Common myeloid progenitor, CD34-positive (primary cell): ENCODE measurements at regions of chr4 and their contacts with region 1.

Region 1: GRCh38 chr4:2862528-2862927 is 18.9 kb downstream of the ADD1 start:
- DNase-seq: no peak
- H3K4me3 ChIP-seq: no peak overlapping the region
- H3K27ac ChIP-seq: no peak overlapping the region
- H3K4me1 ChIP-seq: peaks cover 27 to 51% (median 42%) of the 10 kb centered on the region in 4 experiments
- H3K27me3 ChIP-seq: no peaks in the 10 kb centered on the region

Region 2: DNA sequence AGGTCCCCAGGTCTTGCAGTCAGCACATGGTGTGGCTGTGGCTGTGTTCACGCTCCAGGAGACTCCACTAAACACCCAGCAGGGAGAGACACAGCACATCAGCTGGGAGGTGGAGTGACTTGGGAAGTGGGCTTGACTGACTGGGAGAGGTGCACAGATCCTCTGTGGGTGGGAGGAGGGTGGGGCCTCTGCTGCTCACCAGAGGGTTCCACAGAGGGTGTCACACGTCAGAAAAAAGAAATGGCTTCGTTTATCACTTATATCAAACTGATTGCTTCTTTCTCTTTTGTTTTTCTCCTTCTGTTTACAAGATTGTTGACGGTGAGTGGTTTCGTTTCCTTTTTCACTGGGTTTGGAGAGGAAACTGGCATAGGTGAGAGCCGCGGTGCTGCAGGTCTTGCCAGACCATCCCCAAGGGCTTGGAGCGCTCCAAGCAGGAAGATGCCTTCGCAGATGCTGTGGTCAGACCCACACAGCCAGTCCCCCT is 350.8 kb before region 1 on chr4:
- CTCF ChIA-PET with region 1: no interaction called
- POLR2A ChIA-PET with region 1: no interaction called
- DNase-seq: no peak
- H3K4me3 ChIP-seq: no peak overlapping the region
- H3K27ac ChIP-seq: no peak overlapping the region
- H3K4me1 ChIP-seq: no peaks in the 10 kb centered on the region
- H3K27me3 ChIP-seq: no peaks in the 10 kb centered on the region

Region 3: GRCh38 chr4:2852481-2852921 is 10.0 kb before region 1 on chr4:
- CTCF ChIA-PET with region 1: interaction called, 17 read pairs
- POLR2A ChIA-PET with region 1: interaction called, 3 read pairs
- DNase-seq: peak in 1 of 3 donors; percentile 69
- H3K4me3 ChIP-seq: peak overlapping the region in 1 of 7 experiments; percentile 33
- H3K27ac ChIP-seq: no peak overlapping the region
- H3K4me1 ChIP-seq: peaks cover 9 to 42% (median 33%) of the 10 kb centered on the region in 4 experiments
- H3K27me3 ChIP-seq: no peaks in the 10 kb centered on the region

Region 4: GRCh38 chr4:3037957-3038461 is 175.5 kb after region 1 on chr4:
- CTCF ChIA-PET with region 1: no interaction called
- POLR2A ChIA-PET with region 1: no interaction called
- DNase-seq: peak in 2 of 3 donors; percentile 73 to 78
- H3K4me3 ChIP-seq: peak overlapping the region in 6 of 7 experiments; percentile 13 to 76 (median 57)
- H3K27ac ChIP-seq: no peak overlapping the region
- H3K4me1 ChIP-seq: peaks cover 0 to 40% (median 24%) of the 10 kb centered on the region in 4 experiments
- H3K27me3 ChIP-seq: no peaks in the 10 kb centered on the region